ENCODE measurements at regions of chr2 and their contacts with region 1.

Region 1: GRCh38 chr2:105576440-105577252 is 168.1 kb upstream of the NCK2 start:
- DNase-seq: peak in 1 of 2 donors; percentile 47
- ATAC-seq: peak; percentile 39 to 77 (median 62)
- H3K4me3 ChIP-seq: no peak overlapping the region
- H3K27ac ChIP-seq: peak overlapping the region in 7 of 10 donors; percentile 4 to 54 (median 43)
- H3K4me1 ChIP-seq: peaks cover 4 to 30% (median 12%) of the 10 kb centered on the region in 9 donors
- H3K27me3 ChIP-seq: peaks cover 0 to 3% (median 0%) of the 10 kb centered on the region in 7 donors
- CTCF ChIP-seq: peak; percentile 37 to 79 (median 65)

Region 2: DNA sequence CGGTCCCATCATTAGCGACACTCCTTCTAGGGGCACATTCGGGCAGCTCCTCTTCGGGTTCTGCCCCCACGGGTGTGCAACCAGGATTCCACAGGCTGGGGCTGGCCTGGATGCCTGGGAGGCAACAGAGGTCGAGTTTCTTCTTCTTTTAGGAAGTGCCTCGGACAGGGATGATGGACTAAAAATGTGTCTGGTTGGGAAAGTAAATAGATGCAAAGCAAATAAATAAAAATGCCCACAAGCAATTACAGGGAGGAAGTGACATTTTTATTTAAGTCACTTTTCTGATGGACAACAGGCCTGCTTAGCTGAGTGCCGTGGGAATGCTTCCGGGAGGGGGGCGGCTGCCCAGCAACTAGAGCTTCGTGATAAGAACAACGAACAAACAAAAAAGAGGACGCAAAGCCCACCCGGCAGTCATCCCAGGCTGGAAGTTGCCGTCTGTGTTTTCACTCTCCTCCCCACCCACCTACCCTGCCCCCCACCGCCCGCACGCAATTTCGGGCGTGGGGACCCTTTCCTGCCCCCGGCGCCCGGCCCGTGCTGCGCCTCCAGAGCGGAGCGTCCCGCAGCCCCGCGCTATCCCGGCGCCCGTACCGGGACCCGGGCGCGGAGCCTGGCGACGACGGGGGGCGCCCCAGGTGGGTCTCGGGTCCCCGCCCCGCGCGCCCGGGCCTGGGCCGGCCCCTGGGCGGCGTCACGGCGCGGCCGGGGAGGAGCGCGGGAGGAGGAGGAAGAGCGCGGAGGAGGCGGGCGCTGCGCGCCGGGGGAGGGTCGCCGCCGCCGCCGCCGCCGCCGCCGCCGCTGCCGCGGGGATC is 167.7 kb after region 1 on chr2:
- intact Hi-C with region 1: loop called in 7 of 10 experiments (anchors 2 to 10 kb)
- DNase-seq: peak; percentile 56 to 79
- ATAC-seq: peak; percentile 72 to 93 (median 90)
- H3K4me3 ChIP-seq: peak overlapping the region; percentile 53 to 85 (median 76)
- H3K27ac ChIP-seq: peak overlapping the region; percentile 89 to 97 (median 94)
- H3K4me1 ChIP-seq: peaks cover 13 to 55% (median 46%) of the 10 kb centered on the region in 9 donors
- H3K27me3 ChIP-seq: no peaks in the 10 kb centered on the region
- CTCF ChIP-seq: no peak

Region 3: DNA sequence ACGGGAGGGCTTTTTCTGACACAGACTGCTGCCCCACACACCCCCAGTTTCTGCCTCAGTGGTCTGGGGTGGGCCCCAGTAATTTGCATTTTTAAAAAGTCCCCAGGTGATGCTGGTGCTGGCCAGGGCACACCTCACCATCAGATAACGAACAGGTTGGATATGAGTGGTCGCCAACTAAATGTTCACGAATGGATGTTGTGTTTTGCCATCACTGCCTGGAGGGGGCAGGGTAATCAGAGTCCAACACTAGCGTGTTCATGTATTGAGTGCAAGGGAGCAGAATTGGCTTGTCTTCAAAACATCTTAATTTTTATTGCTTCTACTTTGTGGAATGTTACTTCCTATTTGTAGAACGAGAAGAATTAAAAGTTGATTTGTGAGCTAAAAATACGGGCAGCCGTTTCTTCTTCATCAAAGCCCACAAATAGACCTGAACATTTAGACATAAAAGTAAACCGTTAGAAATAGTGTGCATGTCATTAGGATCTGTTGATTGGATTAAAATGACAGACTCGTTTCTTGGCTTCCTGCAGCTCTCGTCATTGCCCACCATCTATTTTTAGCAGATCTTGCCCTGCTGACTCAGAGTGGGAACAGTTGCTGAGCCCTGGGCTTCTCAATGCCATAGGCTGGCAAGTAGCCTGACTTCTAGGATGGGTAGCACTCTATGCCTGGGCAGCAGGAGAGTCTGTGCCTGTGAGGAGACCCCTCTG is 213.3 kb after region 1 on chr2:
- intact Hi-C with region 1: loop called in 1 of 10 experiments (anchors 5 kb)
- DNase-seq: peak in 1 of 2 donors; percentile 55
- ATAC-seq: peak; percentile 79 to 92 (median 87)
- H3K4me3 ChIP-seq: peak overlapping the region in 4 of 10 donors; percentile 3 to 23 (median 10)
- H3K27ac ChIP-seq: peak overlapping the region in 7 of 10 donors; percentile 6 to 61 (median 43)
- H3K4me1 ChIP-seq: peaks cover 21 to 91% (median 69%) of the 10 kb centered on the region in 9 donors
- H3K27me3 ChIP-seq: no peaks in the 10 kb centered on the region
- CTCF ChIP-seq: peak in 4 of 9 donors; percentile 26 to 38 (median 31)

Region 4: GRCh38 chr2:105904938-105905337 is 328.3 kb after region 1 on chr2:
- intact Hi-C with region 1: loop called in 1 of 10 experiments (anchors 10 kb)
- DNase-seq: no peak
- ATAC-seq: no peak
- H3K4me3 ChIP-seq: no peak overlapping the region
- H3K27ac ChIP-seq: no peak overlapping the region
- H3K4me1 ChIP-seq: peaks cover 0 to 40% (median 8%) of the 10 kb centered on the region in 9 donors
- H3K27me3 ChIP-seq: no peaks in the 10 kb centered on the region
- CTCF ChIP-seq: no peak

Region 5: GRCh38 chr2:105969555-105969954 is 392.9 kb after region 1 on chr2:
- intact Hi-C with region 1: loop called in 2 of 10 experiments (anchors 10 kb)
- DNase-seq: no peak
- ATAC-seq: no peak
- H3K4me3 ChIP-seq: no peak overlapping the region
- H3K27ac ChIP-seq: no peak overlapping the region
- H3K4me1 ChIP-seq: no peaks in the 10 kb centered on the region
- H3K27me3 ChIP-seq: no peaks in the 10 kb centered on the region
- CTCF ChIP-seq: peak in 3 of 9 donors; percentile 11 to 33 (median 17)

Region 6: DNA sequence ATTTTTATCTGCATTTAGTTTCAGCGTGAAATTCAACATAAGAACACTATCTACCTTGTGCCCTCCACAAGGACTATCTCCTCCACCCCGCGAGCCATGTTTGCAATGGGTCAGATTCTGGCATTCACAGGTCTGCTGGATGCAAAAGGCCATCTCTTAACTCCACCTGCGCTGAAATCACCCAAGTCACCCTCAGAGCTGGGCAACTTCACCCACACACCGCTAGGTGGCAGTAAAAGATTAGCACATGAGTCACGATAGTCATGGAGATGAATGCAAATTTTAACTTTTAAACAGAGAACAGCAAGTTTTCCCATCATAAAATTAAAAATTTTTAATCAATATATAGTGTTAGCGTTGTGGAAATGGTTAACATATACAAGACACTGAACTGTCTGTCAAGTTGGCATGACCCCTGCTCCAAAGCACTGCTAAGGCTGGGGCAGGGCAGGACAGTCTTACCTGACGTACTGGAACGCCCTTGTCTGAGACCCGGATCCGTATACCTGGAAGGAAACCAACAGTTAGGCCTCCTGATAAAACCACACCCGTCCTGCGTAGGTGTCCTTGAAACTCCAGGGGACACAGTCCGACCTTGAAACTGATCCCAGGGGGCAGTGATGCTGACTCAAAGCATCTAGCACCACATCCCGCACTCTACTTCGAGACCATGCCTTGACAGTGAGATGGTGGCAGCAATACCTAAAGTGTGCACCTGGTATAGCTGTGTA is 527.9 kb after region 1 on chr2:
- intact Hi-C with region 1: loop called in 1 of 10 experiments (anchors 5 kb)
- DNase-seq: peak in 1 of 2 donors; percentile 45
- ATAC-seq: peak in 5 of 8 donors; percentile 28 to 66 (median 55)
- H3K4me3 ChIP-seq: no peak overlapping the region
- H3K27ac ChIP-seq: no peak overlapping the region
- H3K4me1 ChIP-seq: peaks cover 0 to 22% (median 14%) of the 10 kb centered on the region in 9 donors
- H3K27me3 ChIP-seq: no peaks in the 10 kb centered on the region
- CTCF ChIP-seq: peak; percentile 86 to 98 (median 94)